Activated CD4-positive, alpha-beta memory T cell treated with anti-CD3 and anti-CD28 coated beads, Interleukin-2, amount 10 ng/mL, durations not matched to agents 7 days and 5 days (primary cell): ENCODE measurements at regions of chr13 and their contacts with region 1.

Region 1: GRCh38 chr13:48769107-48769704 is 115.5 kb downstream of the CYSLTR2 start:
- DNase-seq: peak; percentile 84
- H3K4me3 Mint-ChIP-seq: no peak overlapping the region
- H3K27ac Mint-ChIP-seq: no peak overlapping the region
- H3K4me1 Mint-ChIP-seq: peaks cover 37% of the 10 kb centered on the region
- H3K27me3 Mint-ChIP-seq: peaks cover 33% of the 10 kb centered on the region

Region 2: DNA sequence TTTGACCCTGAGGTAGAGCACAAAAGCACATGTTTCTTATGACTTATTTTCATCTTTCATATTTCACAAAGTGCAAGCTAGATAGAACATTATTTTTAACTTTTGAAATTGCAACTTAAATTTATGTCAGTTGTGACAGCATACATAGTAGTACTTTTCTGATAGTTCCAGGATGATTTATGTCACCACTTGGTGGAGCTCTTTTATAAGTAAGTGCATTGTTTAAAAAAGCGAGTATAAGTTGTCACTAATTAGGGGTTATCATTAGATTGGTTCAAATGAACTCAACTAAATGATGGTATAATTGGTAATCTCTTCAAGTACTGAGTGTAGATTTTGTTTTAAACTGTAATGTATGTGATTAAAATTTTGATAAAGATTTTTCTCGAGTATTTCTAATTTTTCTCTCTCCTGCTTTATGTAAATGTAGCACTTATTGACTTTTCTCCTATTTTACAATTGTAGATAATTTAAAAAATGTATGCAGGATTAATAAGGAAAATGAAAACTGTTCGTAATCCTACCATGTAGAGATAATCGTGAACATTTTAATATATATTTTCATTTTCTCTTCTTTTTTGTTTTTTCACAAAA is 434.6 kb before region 1 on chr13:
- CTCF ChIA-PET with region 1: interaction called, 30 read pairs
- POLR2A ChIA-PET with region 1: no interaction called
- DNase-seq: no peak
- H3K4me3 Mint-ChIP-seq: no peak overlapping the region
- H3K27ac Mint-ChIP-seq: no peak overlapping the region
- H3K4me1 Mint-ChIP-seq: peaks cover 18% of the 10 kb centered on the region
- H3K27me3 Mint-ChIP-seq: no peaks in the 10 kb centered on the region

Region 3: GRCh38 chr13:48595431-48596429 is 173.5 kb before region 1 on chr13:
- CTCF ChIA-PET with region 1: interaction called, 51 read pairs
- POLR2A ChIA-PET with region 1: no interaction called
- DNase-seq: peak; percentile 66
- H3K4me3 Mint-ChIP-seq: no peak overlapping the region
- H3K27ac Mint-ChIP-seq: no peak overlapping the region
- H3K4me1 Mint-ChIP-seq: no peaks in the 10 kb centered on the region
- H3K27me3 Mint-ChIP-seq: peaks cover 3% of the 10 kb centered on the region